Endothelial cell of umbilical vein (primary cell): ENCODE measurements at regions of chr22 and their contacts with region 1.

Region 1: DNA sequence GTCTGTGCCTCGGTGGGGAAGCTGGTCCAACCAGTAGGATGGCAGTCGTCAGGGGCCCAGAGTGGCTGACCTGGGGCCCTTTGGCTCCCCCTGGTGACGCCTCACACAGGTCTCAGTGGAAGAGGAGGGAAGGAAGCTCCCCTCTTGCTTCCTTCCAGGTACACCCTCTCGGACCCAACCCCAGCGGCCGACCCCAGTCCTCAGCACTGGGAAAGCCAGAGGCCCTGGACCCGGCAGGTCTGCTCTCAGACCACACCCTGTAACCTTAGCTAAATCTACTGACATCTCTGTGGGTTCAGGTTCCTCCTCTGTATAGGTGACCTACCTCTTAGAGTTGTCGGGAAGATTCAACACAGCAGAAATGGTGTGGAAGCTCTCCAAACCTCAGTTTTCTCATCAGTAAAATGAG is 3.4 kb upstream of the SCUBE1 start:
- DNase-seq: peak; percentile 29
- H3K4me3 ChIP-seq: no peak overlapping the region
- H3K27ac ChIP-seq: no peak overlapping the region
- H3K4me1 ChIP-seq: no peaks in the 10 kb centered on the region
- H3K27me3 ChIP-seq: peaks cover 20 to 23% of the 10 kb centered on the region in 2 experiments
- CTCF ChIP-seq: peak; percentile 46 to 78
- POLR2A ChIP-seq: no peak

Region 2: DNA sequence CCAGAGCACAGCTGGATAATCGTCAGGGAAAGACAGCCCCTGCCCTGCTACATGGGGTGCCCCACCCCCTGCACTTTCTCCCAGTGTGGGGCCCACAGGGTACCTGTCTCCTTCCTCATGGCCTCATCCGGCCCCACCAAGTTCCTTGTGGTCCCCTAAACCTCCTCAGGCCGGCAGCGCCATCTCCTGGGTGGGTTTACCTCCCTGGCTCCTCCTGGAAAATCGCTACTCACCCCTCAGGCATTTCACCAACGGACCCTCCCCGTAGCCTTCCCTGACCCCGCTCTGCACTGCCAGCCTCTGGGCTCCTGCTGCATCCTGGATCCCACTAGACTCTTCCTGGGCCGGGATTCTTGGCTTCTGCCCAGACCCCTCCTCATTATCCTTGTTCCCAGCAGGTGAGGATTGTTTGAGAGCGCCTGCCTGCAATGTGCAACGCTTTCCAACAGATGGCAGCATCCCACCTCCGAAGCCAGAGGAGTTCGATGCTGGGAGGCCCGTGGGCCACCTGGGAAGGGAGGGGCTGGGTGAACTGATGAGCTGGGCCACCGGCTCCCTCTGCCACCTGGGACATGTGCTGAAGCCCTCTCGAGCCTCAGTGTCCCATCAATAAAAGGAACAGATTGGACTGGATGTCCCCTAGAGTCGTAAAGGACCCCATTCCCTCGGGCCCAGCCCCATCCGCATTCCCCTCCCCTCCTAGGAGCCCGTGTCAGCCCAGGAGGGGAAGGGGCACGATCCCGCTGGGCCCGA is 115.4 kb before region 1 on chr22:
- CTCF ChIA-PET with region 1: interaction called, 106 read pairs
- POLR2A ChIA-PET with region 1: no interaction called
- dilution Hi-C with region 1: no loop called
- intact Hi-C with region 1: loop called (anchors 1 kb)
- DNase-seq: peak; percentile 50
- H3K4me3 ChIP-seq: no peak overlapping the region
- H3K27ac ChIP-seq: no peak overlapping the region
- H3K4me1 ChIP-seq: no peaks in the 10 kb centered on the region
- H3K27me3 ChIP-seq: no peaks in the 10 kb centered on the region
- CTCF ChIP-seq: peak; percentile 83 to 91
- POLR2A ChIP-seq: no peak

Region 3: DNA sequence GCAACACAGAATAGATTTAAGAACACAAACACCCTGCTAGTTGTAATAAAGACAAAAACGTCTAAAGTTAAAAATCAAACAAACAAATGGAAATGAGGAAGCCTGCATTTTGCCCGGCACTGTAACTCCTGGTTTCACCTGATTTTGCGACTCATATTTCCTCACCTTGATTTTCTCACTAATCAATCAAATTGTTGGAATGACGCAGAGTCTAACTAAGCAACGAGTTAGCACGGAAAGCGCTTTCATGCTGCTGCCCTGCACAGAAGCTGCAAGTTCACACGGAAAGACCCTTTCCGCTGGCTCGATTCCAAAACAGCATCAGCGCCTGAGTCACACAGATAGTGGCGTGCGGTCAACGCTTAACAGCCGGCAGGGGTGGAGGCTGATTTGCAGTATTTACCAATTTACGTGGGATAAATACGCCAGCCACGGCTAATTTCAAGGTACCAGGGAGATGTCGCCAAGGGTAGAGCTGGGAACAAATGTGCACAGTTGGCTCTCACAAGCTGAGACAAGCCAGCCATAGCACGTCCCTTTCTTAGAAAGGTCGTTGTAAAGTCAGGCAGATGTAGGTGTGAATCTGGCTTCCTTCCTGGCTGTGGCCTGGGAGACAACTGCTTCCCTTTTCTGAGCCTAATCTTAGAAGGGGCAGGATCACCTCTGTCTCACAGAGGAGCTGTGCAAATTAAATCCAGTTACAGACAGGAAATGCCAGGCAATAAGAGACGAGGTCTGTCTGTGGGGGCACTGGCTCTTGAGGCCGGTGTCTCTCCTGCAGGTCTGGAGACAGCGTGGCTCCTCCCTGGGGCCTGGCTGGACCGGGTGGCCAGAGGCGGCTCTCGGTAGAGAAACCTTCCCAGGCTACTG is 82.6 kb before region 1 on chr22:
- CTCF ChIA-PET with region 1: interaction called, 334 read pairs
- POLR2A ChIA-PET with region 1: no interaction called
- dilution Hi-C with region 1: no loop called
- intact Hi-C with region 1: no loop called
- DNase-seq: peak; percentile 97
- H3K4me3 ChIP-seq: peak overlapping the region in 1 of 3 experiments; percentile 30
- H3K27ac ChIP-seq: peak overlapping the region; percentile 93
- H3K4me1 ChIP-seq: peaks cover 23% of the 10 kb centered on the region
- H3K27me3 ChIP-seq: no peaks in the 10 kb centered on the region
- CTCF ChIP-seq: no peak
- POLR2A ChIP-seq: no peak

Region 4: DNA sequence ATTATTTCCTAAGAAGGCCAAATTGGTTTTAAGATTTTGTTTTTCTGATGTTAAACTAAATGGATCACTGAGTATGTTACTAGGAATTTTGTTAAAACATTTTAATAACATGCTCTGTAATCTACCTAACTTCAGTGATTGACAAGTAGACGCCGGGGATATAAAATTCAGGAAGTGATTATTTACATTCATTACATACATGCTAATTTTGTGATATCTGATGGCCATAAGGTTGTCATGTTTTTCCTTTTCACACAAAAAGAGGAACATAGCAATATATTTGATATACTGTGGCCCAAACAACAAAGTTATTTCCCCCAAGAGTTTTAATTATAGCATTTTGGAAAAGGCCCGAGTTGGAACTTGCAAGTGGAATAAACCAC is 15.5 kb before region 1 on chr22:
- CTCF ChIA-PET with region 1: interaction called, 18 read pairs
- POLR2A ChIA-PET with region 1: no interaction called
- dilution Hi-C with region 1: no loop called
- intact Hi-C with region 1: no loop called
- DNase-seq: no peak
- H3K4me3 ChIP-seq: no peak overlapping the region
- H3K27ac ChIP-seq: no peak overlapping the region
- H3K4me1 ChIP-seq: no peaks in the 10 kb centered on the region
- H3K27me3 ChIP-seq: no peaks in the 10 kb centered on the region
- CTCF ChIP-seq: no peak
- POLR2A ChIP-seq: no peak

Region 5: DNA sequence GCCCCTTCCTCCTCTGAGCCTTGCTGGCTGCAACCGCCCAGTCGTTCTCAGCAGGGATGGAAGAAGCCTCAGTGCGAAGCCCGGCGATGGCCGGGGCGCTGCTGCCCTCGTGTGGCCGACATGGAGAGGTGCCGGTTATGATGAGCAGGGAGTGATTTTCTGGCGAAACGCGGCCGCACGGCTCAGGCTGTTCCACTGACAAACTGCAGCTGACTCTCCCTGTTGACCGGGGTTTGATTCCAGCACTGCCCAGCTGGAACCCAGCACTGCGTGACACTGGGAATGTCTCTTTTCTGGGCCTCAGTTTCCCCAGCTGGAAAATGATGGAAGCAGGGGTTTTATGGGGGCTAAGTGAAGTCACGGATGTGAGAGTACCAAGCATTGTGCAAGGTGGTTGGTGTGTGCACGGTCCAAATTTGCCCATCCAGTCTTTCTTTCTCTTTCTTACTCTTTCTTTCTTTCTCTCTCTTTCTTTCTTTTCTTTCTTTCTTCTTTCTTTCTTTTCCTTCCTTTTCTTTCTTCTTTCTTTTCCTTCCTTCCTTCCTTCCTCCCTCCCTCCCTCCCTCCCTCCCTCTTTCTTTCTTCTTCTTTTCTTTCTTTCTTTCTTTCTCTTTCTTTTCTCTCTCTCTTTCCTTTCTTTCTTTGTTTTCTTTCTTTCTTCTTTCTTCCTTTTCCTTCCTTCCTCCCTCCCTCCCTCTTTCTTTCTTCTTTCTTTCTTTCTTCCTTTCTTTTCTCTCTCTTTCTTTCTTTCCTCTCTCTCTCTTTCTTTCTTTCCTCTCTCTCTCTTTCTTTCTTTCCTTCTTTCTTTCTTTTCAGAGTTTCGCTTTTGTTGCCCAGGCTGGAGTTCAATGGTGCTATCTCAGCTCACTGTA is 39.5 kb after region 1 on chr22:
- CTCF ChIA-PET with region 1: interaction called, 4 read pairs
- POLR2A ChIA-PET with region 1: no interaction called
- dilution Hi-C with region 1: no loop called
- intact Hi-C with region 1: loop called (anchors 5 kb)
- DNase-seq: peak; percentile 70
- H3K4me3 ChIP-seq: no peak overlapping the region
- H3K27ac ChIP-seq: no peak overlapping the region
- H3K4me1 ChIP-seq: no peaks in the 10 kb centered on the region
- H3K27me3 ChIP-seq: peaks cover 4 to 10% of the 10 kb centered on the region in 2 experiments
- CTCF ChIP-seq: peak; percentile 91 to 95
- POLR2A ChIP-seq: no peak

Region 6: DNA sequence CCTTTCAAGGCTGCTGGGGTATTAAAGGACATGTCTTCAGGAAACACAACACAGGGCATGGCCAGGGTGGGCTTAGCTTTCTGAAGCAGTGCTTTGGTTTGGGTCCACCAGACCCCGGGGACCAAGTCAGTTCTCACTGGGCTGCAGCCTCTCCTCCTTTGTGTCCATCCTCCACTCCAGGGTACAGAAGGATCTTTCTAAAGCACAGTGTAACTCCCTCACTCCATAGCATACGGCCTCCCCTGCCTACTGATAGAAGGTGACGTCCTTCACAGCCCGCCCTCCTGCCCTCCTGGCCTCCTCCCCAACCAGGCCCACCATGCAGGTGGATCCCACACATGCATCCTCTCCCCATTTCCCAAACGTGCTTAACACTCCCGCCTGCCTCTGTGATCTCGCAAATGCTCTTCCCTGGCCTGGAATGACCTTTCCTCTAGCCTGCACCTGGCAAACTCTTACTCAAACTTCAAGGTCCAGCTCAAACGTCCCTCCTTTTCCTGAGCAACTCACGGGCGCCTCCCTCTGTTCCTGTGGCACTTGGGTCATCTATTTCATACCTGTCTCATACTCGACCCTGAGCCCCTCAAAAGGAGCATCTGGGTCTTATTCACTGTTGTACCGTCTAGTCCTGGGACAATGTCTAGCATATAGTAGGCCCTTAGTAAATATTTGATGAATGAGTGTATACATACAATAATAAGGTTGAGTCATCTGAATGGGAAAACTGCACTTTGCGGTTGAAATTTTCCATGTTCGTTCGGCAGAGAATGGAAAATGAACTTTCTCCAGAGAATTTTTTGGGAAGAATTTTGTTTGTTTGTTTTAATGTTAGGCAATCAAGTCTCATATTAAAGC is 277.8 kb after region 1 on chr22:
- CTCF ChIA-PET with region 1: no interaction called
- POLR2A ChIA-PET with region 1: no interaction called
- dilution Hi-C with region 1: no loop called
- intact Hi-C with region 1: no loop called
- DNase-seq: no peak
- H3K4me3 ChIP-seq: no peak overlapping the region
- H3K27ac ChIP-seq: no peak overlapping the region
- H3K4me1 ChIP-seq: no peaks in the 10 kb centered on the region
- H3K27me3 ChIP-seq: no peaks in the 10 kb centered on the region
- CTCF ChIP-seq: no peak
- POLR2A ChIP-seq: no peak